ENCODE measurements at regions of chr10 and their contacts with region 1.

Region 1: GRCh38 chr10:30736685-30737232 is 107.2 kb upstream of the LYZL2 start:
- DNase-seq: peak; percentile 38
- H3K4me3 ChIP-seq: no peak overlapping the region
- H3K27ac ChIP-seq: peak overlapping the region; percentile 38 to 62 (median 60)
- H3K4me1 ChIP-seq: peaks cover 0 to 6% (median 5%) of the 10 kb centered on the region in 4 donors
- H3K27me3 ChIP-seq: no peaks in the 10 kb centered on the region
- CTCF ChIP-seq: no peak
- EP300 ChIP-seq: peak; percentile 77
- POLR2A ChIP-seq: no peak

Region 2: DNA sequence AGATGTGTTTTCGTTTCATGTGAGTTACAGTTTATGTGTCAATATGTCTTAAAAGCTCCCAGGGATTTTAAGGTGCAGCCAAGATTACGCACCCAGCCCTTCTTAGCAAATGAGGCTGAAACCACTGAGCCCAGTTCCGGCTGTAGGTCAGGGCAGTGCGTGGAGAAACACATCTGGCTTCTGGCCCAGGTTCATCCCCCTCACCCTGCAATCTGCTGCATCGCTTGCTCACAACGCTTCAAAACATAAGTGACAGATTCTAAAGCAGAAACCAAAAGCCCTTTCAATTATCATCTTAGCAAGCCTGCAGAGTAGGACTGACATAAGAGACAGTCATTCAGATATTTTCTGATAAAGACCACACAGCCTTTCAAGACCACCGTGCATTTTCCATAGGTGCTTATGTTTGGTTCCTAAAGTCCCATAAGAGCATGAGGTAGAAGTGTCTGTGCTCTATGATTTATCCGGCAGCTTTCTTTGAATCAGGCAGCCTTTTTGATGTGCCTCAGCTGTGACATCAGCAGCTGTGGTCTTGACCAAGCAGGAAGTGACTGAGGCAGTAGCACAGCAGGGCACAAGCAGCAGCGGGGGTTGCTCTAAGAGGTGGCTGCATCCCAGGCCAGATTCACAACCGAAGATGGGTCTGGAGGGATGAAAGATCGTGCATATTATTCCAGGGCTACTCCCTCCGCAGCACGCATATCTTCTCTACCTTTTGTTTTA is 35.1 kb before region 1 on chr10:
- in situ Hi-C with region 1: no loop called
- intact Hi-C with region 1: no loop called
- DNase-seq: peak; percentile 69
- H3K4me3 ChIP-seq: peak overlapping the region in 1 of 4 donors; percentile 1
- H3K27ac ChIP-seq: peak overlapping the region; percentile 39 to 69 (median 60)
- H3K4me1 ChIP-seq: no peaks in the 10 kb centered on the region
- H3K27me3 ChIP-seq: no peaks in the 10 kb centered on the region
- CTCF ChIP-seq: no peak
- EP300 ChIP-seq: no peak
- POLR2A ChIP-seq: no peak

Region 3: GRCh38 chr10:31031558-31032257 is 294.9 kb after region 1 on chr10 and contains the start of gene ZNF438:
- in situ Hi-C with region 1: no loop called
- intact Hi-C with region 1: loop called (anchors 5 kb)
- DNase-seq: peak; percentile 97
- H3K4me3 ChIP-seq: peak within 1 kb of the TSS; percentile 48 to 73 (median 52)
- H3K27ac ChIP-seq: peak within 1 kb of the TSS; percentile 98 to 100 (median 99)
- H3K4me1 ChIP-seq: peaks cover 2 to 22% (median 8%) of the 10 kb centered on the region in 4 donors
- H3K27me3 ChIP-seq: no peaks in the 10 kb centered on the region
- CTCF ChIP-seq: peak; percentile 45 to 92 (median 62)
- EP300 ChIP-seq: peak; percentile 7
- POLR2A ChIP-seq: peak; percentile 80
- total RNA-seq, gene ZNF438: 4.4 to 7.4 (median 6.4) TPM

Measured in transverse colon (tissue), 4 donors.